Ovary (tissue), 10 donors: ENCODE measurements at regions of chr10 and their contacts with region 1.

Region 1: DNA sequence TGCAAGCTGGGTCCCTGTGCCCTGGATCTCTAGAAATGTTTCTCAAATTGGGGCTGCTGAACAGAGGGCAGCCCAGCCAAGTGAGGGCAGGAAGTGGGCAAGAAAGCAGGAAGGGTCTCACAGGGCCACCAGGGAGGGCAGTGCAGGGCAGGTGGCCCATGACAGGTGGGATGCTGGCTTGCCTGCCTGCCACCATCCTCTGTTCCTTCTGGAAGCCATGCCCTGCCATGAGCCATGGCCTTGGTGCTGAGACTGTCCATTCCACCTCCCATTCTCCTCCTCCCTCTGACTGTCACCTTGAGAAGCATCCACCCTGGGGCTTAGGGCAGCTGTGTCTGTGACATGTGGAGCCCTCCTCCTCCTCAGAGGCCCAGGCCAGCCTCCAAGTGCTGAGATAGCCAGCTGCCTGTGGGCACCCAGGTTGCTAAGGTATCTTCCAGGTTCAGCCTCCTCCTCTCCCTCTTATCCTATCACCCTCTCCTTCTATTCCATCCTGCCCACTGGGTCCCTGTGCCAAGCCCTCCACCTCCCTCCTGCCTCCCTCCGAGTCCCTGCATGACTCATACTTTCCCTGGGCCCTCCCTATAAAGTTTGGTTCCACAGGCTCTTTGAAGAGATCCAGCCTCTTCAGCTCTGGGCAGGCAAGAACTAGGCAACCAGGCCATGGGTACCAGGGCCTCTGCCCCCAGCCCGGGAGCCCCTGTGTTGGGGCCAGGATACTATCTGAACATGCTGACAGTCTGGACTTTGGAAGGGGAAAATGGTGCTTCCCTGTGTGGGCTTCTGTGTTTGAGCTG is 1.3 kb downstream of the VSIR start:
- DNase-seq: peak; percentile 80 to 90 (median 83)
- H3K4me3 ChIP-seq: peak overlapping the region; percentile 84
- H3K27ac ChIP-seq: peak overlapping the region; percentile 79 to 87
- H3K4me1 ChIP-seq: peaks cover 32% of the 10 kb centered on the region
- H3K27me3 ChIP-seq: no peaks in the 10 kb centered on the region
- CTCF ChIP-seq: no peak
- EP300 ChIP-seq: peak; percentile 40
- POLR2A ChIP-seq: peak; percentile 30

Region 2: GRCh38 chr10:71383972-71384687 is 387.9 kb before region 1 on chr10:
- intact Hi-C with region 1: loop called in 1 of 4 experiments (anchors 5 kb)
- DNase-seq: peak; percentile 55 to 84 (median 77)
- H3K4me3 ChIP-seq: no peak overlapping the region
- H3K27ac ChIP-seq: no peak overlapping the region
- H3K4me1 ChIP-seq: no peaks in the 10 kb centered on the region
- H3K27me3 ChIP-seq: no peaks in the 10 kb centered on the region
- CTCF ChIP-seq: peak; percentile 62 to 90 (median 83)
- EP300 ChIP-seq: no peak
- POLR2A ChIP-seq: no peak

Region 3: DNA sequence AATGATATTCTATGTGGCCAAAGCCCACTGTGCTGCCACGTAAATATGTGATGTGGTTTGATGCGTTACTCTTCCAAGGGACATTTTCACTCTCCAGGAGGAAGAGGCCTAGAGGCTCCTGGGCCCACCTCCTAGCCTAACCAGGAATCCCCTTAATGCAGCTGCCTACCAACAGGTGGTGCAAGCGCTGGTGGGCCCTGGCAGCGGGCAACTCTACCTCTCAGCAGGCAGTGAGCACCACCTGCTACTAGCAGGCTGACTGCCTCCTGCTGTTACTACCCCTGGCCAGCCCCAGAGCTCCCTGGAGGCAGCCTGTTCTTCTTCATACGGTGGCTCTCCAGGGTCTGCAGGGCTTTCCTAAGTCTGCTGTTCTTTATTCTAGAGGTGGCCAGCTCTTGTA is 312.5 kb before region 1 on chr10:
- intact Hi-C with region 1: no loop called
- DNase-seq: no peak
- H3K4me3 ChIP-seq: no peak overlapping the region
- H3K27ac ChIP-seq: no peak overlapping the region
- H3K4me1 ChIP-seq: no peaks in the 10 kb centered on the region
- H3K27me3 ChIP-seq: no peaks in the 10 kb centered on the region
- CTCF ChIP-seq: no peak
- EP300 ChIP-seq: no peak
- POLR2A ChIP-seq: no peak

Region 4: GRCh38 chr10:71713135-71714030 is 58.6 kb before region 1 on chr10:
- intact Hi-C with region 1: loop called in 3 of 4 experiments (anchors 2 to 5 kb)
- DNase-seq: peak; percentile 92 to 94 (median 94)
- H3K4me3 ChIP-seq: no peak overlapping the region
- H3K27ac ChIP-seq: peak overlapping the region; percentile 63 to 95
- H3K4me1 ChIP-seq: peaks cover 47% of the 10 kb centered on the region
- H3K27me3 ChIP-seq: no peaks in the 10 kb centered on the region
- CTCF ChIP-seq: peak in 1 of 3 donors; percentile 43
- EP300 ChIP-seq: peak; percentile 25
- POLR2A ChIP-seq: no peak

Region 5: DNA sequence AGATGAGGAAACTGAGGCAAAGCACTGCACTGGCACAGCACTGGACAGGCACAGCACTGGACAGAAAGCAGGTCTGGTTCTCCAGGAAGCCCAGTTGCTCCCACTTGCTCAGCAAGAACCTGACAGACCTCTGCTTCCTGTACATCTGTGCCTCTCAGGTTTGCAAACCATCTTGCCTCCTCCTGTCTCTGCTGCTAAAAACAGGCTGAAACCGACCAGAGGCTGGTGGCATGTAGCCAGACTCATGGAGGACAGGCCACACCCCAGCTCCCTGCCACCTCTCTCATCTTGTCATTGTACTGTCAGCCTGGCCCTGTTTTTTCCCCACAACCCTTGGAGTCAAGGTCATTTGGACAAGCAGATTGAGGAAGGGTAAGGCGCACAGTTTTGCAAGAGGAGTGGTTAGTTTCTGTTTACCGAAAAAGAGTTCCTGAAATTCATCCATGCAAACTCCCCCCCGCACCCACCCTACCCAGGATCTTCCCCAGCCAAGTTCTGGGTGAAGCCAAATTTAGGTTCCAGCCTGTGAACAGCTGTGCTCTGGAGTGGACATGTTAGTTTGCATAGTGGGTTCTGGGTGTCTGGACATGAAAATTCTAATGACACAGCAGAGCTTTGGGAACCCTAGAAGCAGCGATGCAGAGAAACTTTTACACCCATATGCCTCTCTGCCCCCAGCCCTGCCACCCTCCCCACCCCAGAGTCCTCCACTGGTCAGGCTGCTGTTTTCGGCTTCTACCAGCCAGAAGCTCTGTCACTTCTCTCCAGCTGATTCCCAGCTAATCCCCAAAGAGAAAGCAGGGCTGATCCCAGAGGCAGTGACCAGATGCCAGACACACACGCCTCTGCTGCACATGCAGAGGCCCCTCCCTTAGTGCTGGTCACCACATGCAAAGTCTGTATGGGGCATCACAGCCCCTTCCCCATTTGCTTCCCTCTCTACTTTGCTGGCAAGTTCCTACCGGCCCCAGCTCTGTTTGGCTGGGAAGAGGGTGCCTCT is 44.0 kb before region 1 on chr10:
- intact Hi-C with region 1: loop called in 1 of 4 experiments (anchors 5 kb)
- DNase-seq: peak; percentile 78 to 86 (median 82)
- H3K4me3 ChIP-seq: no peak overlapping the region
- H3K27ac ChIP-seq: peak overlapping the region; percentile 32 to 85
- H3K4me1 ChIP-seq: peaks cover 19% of the 10 kb centered on the region
- H3K27me3 ChIP-seq: no peaks in the 10 kb centered on the region
- CTCF ChIP-seq: no peak
- EP300 ChIP-seq: no peak
- POLR2A ChIP-seq: no peak